Caco-2 (cell line): ENCODE measurements at regions of chr6 and their contacts with region 1.

Region 1: GRCh38 chr6:87848574-87848973 is 146.5 kb upstream of the AKIRIN2 start:
- DNase-seq: peak; percentile 46 to 51
- H3K4me3 ChIP-seq: no peak overlapping the region
- H3K4me3 Mint-ChIP-seq: no peak overlapping the region
- H3K27ac Mint-ChIP-seq: no peak overlapping the region
- H3K4me1 ChIP-seq: peaks cover 10% of the 10 kb centered on the region; the same call in 1 of the 2 replicates
- H3K4me1 Mint-ChIP-seq: peaks cover 9% of the 10 kb centered on the region
- H3K27me3 ChIP-seq: no peaks in the 10 kb centered on the region
- H3K27me3 Mint-ChIP-seq: no peaks in the 10 kb centered on the region
- CTCF ChIP-seq: no peak

Region 2: GRCh38 chr6:87870556-87870955 is 22.0 kb after region 1 on chr6:
- CTCF ChIA-PET with region 1: no interaction called
- POLR2A ChIA-PET with region 1: no interaction called
- intact Hi-C with region 1: loop called (anchors 1 kb)
- DNase-seq: no peak
- H3K4me3 ChIP-seq: no peak overlapping the region
- H3K4me3 Mint-ChIP-seq: no peak overlapping the region
- H3K27ac Mint-ChIP-seq: no peak overlapping the region
- H3K4me1 ChIP-seq: peaks cover 11% of the 10 kb centered on the region; the same call in 1 of the 2 replicates
- H3K4me1 Mint-ChIP-seq: peaks cover 9% of the 10 kb centered on the region
- H3K27me3 ChIP-seq: no peaks in the 10 kb centered on the region
- H3K27me3 Mint-ChIP-seq: peaks cover 5% of the 10 kb centered on the region
- CTCF ChIP-seq: no peak